ENCODE measurements at regions of chr19 and their contacts with region 1.

Region 1: GRCh38 chr19:13861732-13862531 is 15.0 kb upstream of the NANOS3 start:
- DNase-seq: peak; percentile 90 to 94 (median 92)
- ATAC-seq: peak; percentile 96
- H3K4me3 ChIP-seq: peak overlapping the region; percentile 33
- H3K27ac ChIP-seq: peak overlapping the region; percentile 63
- H3K4me1 ChIP-seq: peaks cover 6 to 26% of the 10 kb centered on the region in 2 experiments; a peak in 3 of 5 replicates
- H3K27me3 ChIP-seq: peaks cover 11 to 19% of the 10 kb centered on the region in 2 experiments; a peak in 4 of 5 replicates
- CTCF ChIP-seq: peak; percentile 91 to 98 (median 96)
- EP300 ChIP-seq: no peak; the same call in 1 of the 2 replicates
- POLR2A ChIP-seq: peak; percentile 62
- RAD21 ChIP-seq: peak; percentile 97 to 98

Region 2: DNA sequence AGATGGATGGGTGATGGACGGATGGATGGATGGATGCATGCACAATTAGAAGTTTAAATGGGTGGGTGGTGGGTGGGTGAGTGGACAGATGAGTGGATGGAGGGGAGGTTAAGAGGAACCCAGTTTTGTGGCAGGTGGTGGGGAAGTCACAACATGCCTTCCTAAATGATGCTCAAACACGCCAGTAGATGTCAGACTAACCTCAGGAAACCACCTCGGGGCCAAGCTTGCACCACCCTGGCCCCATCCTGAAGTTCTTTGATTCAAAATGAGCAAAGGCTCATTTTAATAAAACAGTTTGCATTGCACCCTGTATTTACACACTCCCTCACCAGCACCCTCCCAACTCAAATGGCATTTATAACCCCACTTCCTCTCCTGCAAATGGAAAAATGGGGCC is 264.3 kb before region 1 on chr19:
- CTCF ChIA-PET with region 1: interaction called, 8 read pairs
- POLR2A ChIA-PET with region 1: no interaction called
- in situ Hi-C with region 1: no loop called
- intact Hi-C with region 1: loop called (anchors 1 kb)
- DNase-seq: peak; percentile 72 to 81 (median 76)
- ATAC-seq: peak; percentile 88
- H3K4me3 ChIP-seq: no peak overlapping the region
- H3K27ac ChIP-seq: no peak overlapping the region
- H3K4me1 ChIP-seq: peaks cover 0 to 4% of the 10 kb centered on the region in 2 experiments; a peak in 2 of 5 replicates
- H3K27me3 ChIP-seq: peaks cover 3 to 14% of the 10 kb centered on the region in 2 experiments; a peak in 3 of 5 replicates
- CTCF ChIP-seq: peak; percentile 68 to 82 (median 73)
- EP300 ChIP-seq: no peak
- POLR2A ChIP-seq: no peak
- RAD21 ChIP-seq: peak; percentile 77 to 90

Region 3: GRCh38 chr19:13604902-13605586 is 256.9 kb before region 1 on chr19:
- CTCF ChIA-PET with region 1: no interaction called
- POLR2A ChIA-PET with region 1: no interaction called
- in situ Hi-C with region 1: loop called (anchors 5 kb)
- intact Hi-C with region 1: no loop called
- DNase-seq: no peak
- ATAC-seq: no peak
- H3K4me3 ChIP-seq: no peak overlapping the region
- H3K27ac ChIP-seq: no peak overlapping the region
- H3K4me1 ChIP-seq: no peaks in the 10 kb centered on the region
- H3K27me3 ChIP-seq: peaks cover 9 to 26% of the 10 kb centered on the region in 2 experiments; a peak in 3 of 5 replicates
- CTCF ChIP-seq: no peak
- EP300 ChIP-seq: no peak
- POLR2A ChIP-seq: no peak
- RAD21 ChIP-seq: no peak

Region 4: GRCh38 chr19:13784731-13785452 is 77.0 kb before region 1 on chr19:
- CTCF ChIA-PET with region 1: interaction called, 25 read pairs
- POLR2A ChIA-PET with region 1: interaction called, 7 read pairs
- in situ Hi-C with region 1: loop called (anchors 5 kb)
- intact Hi-C with region 1: loop called (anchors 1 kb)
- DNase-seq: peak; percentile 43 to 70 (median 61)
- ATAC-seq: peak; percentile 90
- H3K4me3 ChIP-seq: no peak overlapping the region
- H3K27ac ChIP-seq: no peak overlapping the region
- H3K4me1 ChIP-seq: peaks cover 7 to 21% of the 10 kb centered on the region in 2 experiments; a peak in 4 of 5 replicates
- H3K27me3 ChIP-seq: no peaks in the 10 kb centered on the region
- CTCF ChIP-seq: peak; percentile 53 to 81 (median 77)
- EP300 ChIP-seq: no peak
- POLR2A ChIP-seq: no peak
- RAD21 ChIP-seq: peak; percentile 79 to 80

Region 5: GRCh38 chr19:13825489-13826391 is 36.2 kb before region 1 on chr19:
- CTCF ChIA-PET with region 1: no interaction called
- POLR2A ChIA-PET with region 1: interaction called, 4 read pairs
- in situ Hi-C with region 1: no loop called
- intact Hi-C with region 1: loop called (anchors 5 kb)
- DNase-seq: peak; percentile 87 to 91 (median 88)
- ATAC-seq: peak; percentile 99
- H3K4me3 ChIP-seq: no peak overlapping the region
- H3K27ac ChIP-seq: no peak overlapping the region
- H3K4me1 ChIP-seq: peaks cover 7 to 26% of the 10 kb centered on the region in 2 experiments; a peak in 4 of 5 replicates
- H3K27me3 ChIP-seq: no peaks in the 10 kb centered on the region
- CTCF ChIP-seq: no peak
- EP300 ChIP-seq: no peak
- POLR2A ChIP-seq: no peak
- RAD21 ChIP-seq: no peak

Measured in K562 (cell line).